T-cell (primary cell): ENCODE measurements at regions of chr13 and their contacts with region 1.

Region 1: GRCh38 chr13:106241974-106242953 is 293.2 kb downstream of the EFNB2 start:
- DNase-seq: no peak
- ATAC-seq: no peak
- H3K4me3 ChIP-seq: no peak overlapping the region
- H3K4me3 Mint-ChIP-seq: no peak overlapping the region
- H3K27ac ChIP-seq: no peak overlapping the region
- H3K27ac Mint-ChIP-seq: no peak overlapping the region
- H3K4me1 ChIP-seq: no peaks in the 10 kb centered on the region
- H3K4me1 Mint-ChIP-seq: no peaks in the 10 kb centered on the region
- H3K27me3 ChIP-seq: no peaks in the 10 kb centered on the region
- H3K27me3 Mint-ChIP-seq: peaks cover 0 to 9% of the 10 kb centered on the region in 2 donors

Region 2: GRCh38 chr13:106260352-106260751 is 18.1 kb after region 1 on chr13:
- CTCF ChIA-PET with region 1: interaction called in 1 of 2 experiments, 12 read pairs
- POLR2A ChIA-PET with region 1: interaction called in 1 of 2 experiments, 4 read pairs
- DNase-seq: no peak
- ATAC-seq: no peak
- H3K4me3 ChIP-seq: no peak overlapping the region
- H3K4me3 Mint-ChIP-seq: no peak overlapping the region
- H3K27ac ChIP-seq: no peak overlapping the region
- H3K27ac Mint-ChIP-seq: no peak overlapping the region
- H3K4me1 ChIP-seq: no peaks in the 10 kb centered on the region
- H3K4me1 Mint-ChIP-seq: no peaks in the 10 kb centered on the region
- H3K27me3 ChIP-seq: no peaks in the 10 kb centered on the region
- H3K27me3 Mint-ChIP-seq: no peaks in the 10 kb centered on the region